ENCODE measurements at regions of chr6 and their contacts with region 1.

Region 1: DNA sequence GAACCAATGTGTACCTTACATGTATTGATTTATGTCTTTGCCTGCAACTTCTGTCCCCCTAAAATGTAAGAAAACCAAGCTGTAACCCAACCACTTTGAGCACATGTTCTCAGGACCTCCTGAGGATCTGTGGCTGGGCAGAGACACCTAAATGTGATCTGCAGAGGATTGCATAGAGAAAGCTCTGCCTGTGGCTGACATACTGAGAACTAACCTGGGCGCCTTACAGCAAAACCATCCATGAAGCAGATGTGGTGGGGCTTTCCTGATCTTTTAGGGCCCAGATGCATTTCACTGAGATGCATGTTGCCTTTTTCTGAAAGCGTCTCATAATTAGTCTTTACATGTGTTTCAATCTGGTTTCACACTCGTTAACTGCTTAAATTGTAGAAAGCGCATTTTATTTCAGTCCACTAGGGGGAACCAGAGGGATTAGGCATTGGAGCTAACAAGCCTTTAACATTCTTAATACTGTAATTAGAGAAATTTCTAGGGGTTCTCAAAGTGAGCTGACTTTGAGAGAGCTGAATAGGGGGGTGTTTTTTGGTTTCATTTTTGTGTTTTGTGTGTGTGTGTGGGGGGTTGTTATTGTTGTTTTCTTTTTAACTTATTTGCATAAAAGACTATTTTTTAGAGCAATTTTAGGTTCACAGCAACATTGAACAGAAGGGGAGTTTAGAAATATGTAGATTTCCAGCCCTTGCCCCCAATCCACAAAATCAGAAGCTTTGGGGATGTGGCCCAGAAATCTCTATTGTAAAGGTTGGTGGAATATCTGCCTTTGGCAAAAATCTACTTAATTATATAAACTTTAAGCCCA is 50.9 kb upstream of the FAM184A start:
- DNase-seq: peak in 3 of 9 experiments; percentile 28 to 76 (median 72)
- ATAC-seq: peak; percentile 72
- H3K4me3 ChIP-seq: no peak overlapping the region
- H3K4me3 Mint-ChIP-seq: no peak overlapping the region
- H3K27ac ChIP-seq: no peak overlapping the region
- H3K27ac Mint-ChIP-seq: no peak overlapping the region
- H3K4me1 ChIP-seq: no peaks in the 10 kb centered on the region
- H3K4me1 Mint-ChIP-seq: peaks cover 3% of the 10 kb centered on the region
- H3K27me3 ChIP-seq: no peaks in the 10 kb centered on the region
- H3K27me3 Mint-ChIP-seq: peaks cover 2% of the 10 kb centered on the region
- CTCF ChIP-seq: peak; percentile 81

Region 2: GRCh38 chr6:119142041-119142440 is 12.7 kb after region 1 on chr6:
- CTCF ChIA-PET with region 1: interaction called, 12 read pairs
- POLR2A ChIA-PET with region 1: interaction called, 3 read pairs
- intact Hi-C with region 1: no loop called
- DNase-seq: no peak
- ATAC-seq: no peak
- H3K4me3 ChIP-seq: no peak overlapping the region
- H3K4me3 Mint-ChIP-seq: no peak overlapping the region
- H3K27ac ChIP-seq: no peak overlapping the region
- H3K27ac Mint-ChIP-seq: no peak overlapping the region
- H3K4me1 ChIP-seq: no peaks in the 10 kb centered on the region
- H3K4me1 Mint-ChIP-seq: peaks cover 1% of the 10 kb centered on the region
- H3K27me3 ChIP-seq: no peaks in the 10 kb centered on the region
- H3K27me3 Mint-ChIP-seq: no peaks in the 10 kb centered on the region
- CTCF ChIP-seq: no peak

Measured in CD8-positive, alpha-beta T cell (primary cell).